ENCODE measurements at regions of chr16 and their contacts with region 1.

Region 1: GRCh38 chr16:81737885-81738786 is 41.0 kb upstream of the PLCG2 start:
- DNase-seq: peak; percentile 92
- H3K4me3 ChIP-seq: peak overlapping the region; percentile 71
- H3K27ac ChIP-seq: peak overlapping the region; percentile 89
- H3K4me1 ChIP-seq: peaks cover 52% of the 10 kb centered on the region
- CTCF ChIP-seq: peak; percentile 92

Region 2: DNA sequence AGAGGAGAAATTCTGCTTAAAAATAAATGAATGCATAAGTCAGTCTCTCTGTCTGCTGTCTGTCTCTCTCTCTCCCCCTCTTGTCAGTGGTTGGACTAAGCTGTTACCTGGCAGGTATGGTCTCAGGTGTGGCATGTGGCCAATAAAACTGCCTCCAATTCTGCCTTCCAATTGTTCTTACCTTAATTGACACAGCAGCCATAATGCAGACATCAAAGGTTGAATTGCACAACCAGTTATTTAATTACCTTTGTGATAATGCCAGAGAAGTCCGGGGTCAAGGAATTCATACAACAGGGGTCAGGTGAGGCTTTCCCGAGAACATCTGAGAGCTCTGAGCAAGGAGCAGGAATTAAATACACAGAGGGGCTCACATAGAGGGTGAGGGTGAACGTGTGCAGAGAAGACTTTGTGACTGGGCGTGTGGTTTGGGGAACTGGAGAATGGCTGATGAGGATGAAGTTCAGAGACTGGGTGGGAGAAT is 854.9 kb before region 1 on chr16:
- CTCF ChIA-PET with region 1: no interaction called
- POLR2A ChIA-PET with region 1: no interaction called
- intact Hi-C with region 1: no loop called
- DNase-seq: no peak
- H3K4me3 ChIP-seq: no peak overlapping the region
- H3K27ac ChIP-seq: no peak overlapping the region
- H3K4me1 ChIP-seq: no peaks in the 10 kb centered on the region
- CTCF ChIP-seq: no peak

Region 3: DNA sequence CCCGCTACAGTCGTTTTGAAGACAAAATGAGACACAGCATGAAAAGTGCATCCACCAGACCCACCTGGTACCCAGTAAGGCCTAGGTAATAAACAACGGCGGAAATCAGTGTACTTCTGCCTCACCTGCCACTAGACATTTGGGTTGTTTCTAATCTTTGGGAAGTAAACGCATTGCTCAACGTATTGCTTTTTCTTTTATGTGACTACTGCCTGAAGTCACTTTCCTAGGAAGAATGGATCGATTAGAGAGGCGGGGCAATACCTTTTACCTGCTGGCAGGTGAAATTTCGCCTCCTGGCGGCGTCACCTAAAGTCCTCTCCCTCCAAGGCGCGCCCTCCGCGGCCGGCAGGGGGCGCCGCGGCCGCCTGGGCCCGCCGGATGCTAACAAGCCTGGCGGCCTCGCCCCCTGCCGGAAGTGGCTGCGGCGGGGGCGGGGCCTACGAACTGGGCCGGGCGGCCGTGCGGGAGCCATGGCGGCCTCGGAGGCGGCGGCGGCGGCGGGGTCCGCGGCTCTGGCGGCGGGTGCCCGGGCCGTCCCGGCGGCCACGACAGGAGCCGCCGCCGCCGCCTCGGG is 702.6 kb before region 1 on chr16 and contains the start of gene ATMIN:
- CTCF ChIA-PET with region 1: no interaction called
- POLR2A ChIA-PET with region 1: no interaction called
- intact Hi-C with region 1: loop called (anchors 5 kb)
- DNase-seq: peak; percentile 93
- H3K4me3 ChIP-seq: peak within 1 kb of the TSS; percentile 76
- H3K27ac ChIP-seq: peak within 1 kb of the TSS; percentile 15
- H3K4me1 ChIP-seq: peaks cover 13% of the 10 kb centered on the region
- CTCF ChIP-seq: peak; percentile 95
- total RNA-seq, gene ATMIN: 13.6 and 15.0 TPM in 2 replicates

Region 4: DNA sequence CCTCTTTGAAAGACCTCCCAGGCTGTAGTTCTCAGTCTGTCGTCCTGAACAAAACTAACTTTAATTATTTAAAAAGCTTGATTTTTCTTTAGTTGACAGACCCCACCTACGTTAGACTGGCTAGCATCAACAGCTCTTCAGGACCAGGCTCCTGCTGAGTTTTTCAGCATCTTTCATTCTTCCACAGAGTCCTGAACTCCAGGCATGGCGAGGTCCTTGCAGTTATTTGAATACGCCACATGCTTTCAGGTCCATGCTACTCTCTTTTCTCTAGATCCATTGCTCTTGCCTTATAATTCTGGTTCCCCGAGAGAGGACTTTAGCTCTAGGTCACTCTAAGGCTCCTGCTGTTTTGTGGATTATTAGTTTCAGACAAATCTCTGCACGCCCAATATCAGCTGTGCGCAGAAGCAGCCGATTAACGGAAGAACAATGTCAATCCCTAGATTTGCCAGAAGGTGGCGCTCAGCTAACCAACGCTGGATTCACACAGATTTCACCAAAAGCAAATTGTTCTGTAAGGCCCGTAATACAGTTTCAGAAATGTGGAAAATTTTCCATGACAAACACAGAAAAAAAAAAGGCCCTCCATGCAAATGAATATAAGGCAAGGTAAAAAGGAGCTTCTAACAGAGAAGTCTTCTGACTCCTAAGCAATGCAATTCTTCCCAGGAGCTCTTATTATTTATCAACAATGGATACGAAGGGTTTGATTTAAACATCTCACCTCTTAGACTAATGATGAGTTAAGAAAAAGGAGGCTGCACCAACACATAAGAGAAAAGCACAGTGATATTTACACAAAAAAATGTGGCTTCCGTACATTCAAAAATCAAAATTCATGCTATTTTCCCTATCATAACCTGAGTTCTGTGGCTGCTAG is 533.1 kb before region 1 on chr16:
- CTCF ChIA-PET with region 1: no interaction called
- POLR2A ChIA-PET with region 1: no interaction called
- intact Hi-C with region 1: loop called (anchors 1 kb)
- DNase-seq: peak; percentile 46
- H3K4me3 ChIP-seq: no peak overlapping the region
- H3K27ac ChIP-seq: no peak overlapping the region
- H3K4me1 ChIP-seq: no peaks in the 10 kb centered on the region
- CTCF ChIP-seq: peak; percentile 92

Region 5: GRCh38 chr16:81403616-81404373 is 334.3 kb before region 1 on chr16:
- CTCF ChIA-PET with region 1: no interaction called
- POLR2A ChIA-PET with region 1: interaction called, 12 read pairs
- intact Hi-C with region 1: loop called (anchors 1 kb)
- DNase-seq: peak; percentile 86
- H3K4me3 ChIP-seq: peak overlapping the region; percentile 55
- H3K27ac ChIP-seq: no peak overlapping the region
- H3K4me1 ChIP-seq: peaks cover 10% of the 10 kb centered on the region
- CTCF ChIP-seq: peak; percentile 92

Region 6: GRCh38 chr16:81752225-81752875 is 14.2 kb after region 1 on chr16:
- CTCF ChIA-PET with region 1: interaction called, 6 read pairs
- POLR2A ChIA-PET with region 1: interaction called, 26 read pairs
- intact Hi-C with region 1: no loop called
- DNase-seq: peak; percentile 89
- H3K4me3 ChIP-seq: peak overlapping the region; percentile 43
- H3K27ac ChIP-seq: peak overlapping the region; percentile 66
- H3K4me1 ChIP-seq: peaks cover 63% of the 10 kb centered on the region
- CTCF ChIP-seq: no peak

Region 7: DNA sequence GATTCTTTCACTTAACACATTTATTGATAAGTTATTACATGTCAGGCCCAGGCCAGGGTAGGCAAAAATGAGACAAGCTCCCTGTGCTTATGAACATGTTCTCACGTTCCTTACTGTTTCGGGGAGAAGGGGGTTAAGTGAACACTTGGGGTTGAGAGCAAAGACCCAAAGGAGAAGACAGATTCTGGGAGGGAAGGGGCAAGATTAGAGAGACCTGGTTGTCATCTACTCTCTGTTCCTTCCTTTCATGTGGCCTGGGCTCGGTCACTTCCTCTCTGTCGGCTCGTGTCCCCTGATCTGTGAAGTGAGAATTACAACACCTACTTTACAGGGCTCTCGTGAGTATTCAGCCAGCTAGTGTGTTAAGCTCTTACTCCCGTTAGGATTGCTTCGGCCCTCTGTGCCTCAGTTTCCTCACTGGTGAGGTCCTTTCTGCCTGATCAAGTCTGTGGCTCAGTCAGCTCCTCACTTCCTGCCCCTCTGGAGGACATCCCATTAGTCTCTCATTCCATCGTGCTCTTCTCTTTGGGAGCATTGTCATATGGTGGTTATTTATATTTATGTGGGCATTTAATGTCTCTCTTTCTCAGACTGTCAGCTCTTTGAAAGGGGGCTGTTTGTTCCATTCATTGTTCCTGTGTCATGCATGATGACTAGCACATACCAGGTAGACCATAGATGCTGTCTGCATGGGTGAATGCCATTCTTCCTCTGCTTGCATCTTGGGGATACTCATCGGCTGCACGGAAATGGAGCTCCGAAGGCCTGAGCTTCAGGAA is 79.8 kb after region 1 on chr16:
- CTCF ChIA-PET with region 1: no interaction called
- POLR2A ChIA-PET with region 1: interaction called, 12 read pairs
- intact Hi-C with region 1: loop called (anchors 2 kb)
- DNase-seq: peak; percentile 88
- H3K4me3 ChIP-seq: peak overlapping the region; percentile 64
- H3K27ac ChIP-seq: peak overlapping the region; percentile 97
- H3K4me1 ChIP-seq: peaks cover 95% of the 10 kb centered on the region
- CTCF ChIP-seq: no peak

Region 8: DNA sequence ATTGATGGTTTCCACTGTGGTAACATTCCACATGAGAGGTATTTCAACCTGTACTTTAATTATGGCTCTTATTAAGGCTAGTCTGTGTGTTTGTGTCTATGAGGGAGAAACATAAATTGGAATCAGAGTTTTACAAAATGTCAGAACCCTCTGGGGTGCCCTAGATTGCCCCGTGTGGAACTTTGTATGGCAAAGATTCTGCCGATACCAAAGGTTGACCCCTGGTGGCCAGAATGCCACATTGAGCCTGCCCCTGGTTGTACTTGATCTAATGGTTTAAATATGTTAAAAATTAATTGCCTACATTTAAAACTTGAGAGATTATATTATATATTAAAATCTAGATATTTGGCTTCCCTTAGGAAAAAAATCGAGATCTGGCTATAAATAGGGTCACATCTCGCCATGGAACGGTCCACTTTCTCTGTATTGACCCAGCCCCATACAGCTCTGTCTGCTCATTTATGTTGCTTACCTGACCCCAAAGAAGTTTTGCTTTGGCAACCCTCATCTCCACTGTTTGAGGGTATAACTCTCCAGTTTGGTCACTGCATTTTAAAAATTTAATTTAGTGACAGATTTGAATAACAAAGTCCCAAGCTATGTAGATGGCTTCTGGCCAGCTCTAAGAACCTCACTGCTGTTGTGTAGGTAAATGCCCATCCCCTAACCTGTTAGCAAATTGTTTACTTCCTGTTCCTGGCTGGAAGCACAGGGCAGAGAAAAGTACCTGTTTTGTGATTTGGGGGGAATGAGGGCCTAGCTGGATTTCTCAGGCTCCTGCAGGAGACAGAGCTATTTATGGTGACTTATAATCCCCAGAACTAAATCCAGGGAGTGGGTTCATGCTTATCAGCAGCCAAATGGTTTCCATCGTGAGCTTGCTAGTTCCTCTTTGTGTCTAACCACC is 136.0 kb after region 1 on chr16:
- CTCF ChIA-PET with region 1: interaction called, 3 read pairs
- POLR2A ChIA-PET with region 1: interaction called, 3 read pairs
- intact Hi-C with region 1: loop called (anchors 2 kb)
- DNase-seq: peak; percentile 81
- H3K4me3 ChIP-seq: no peak overlapping the region
- H3K27ac ChIP-seq: peak overlapping the region; percentile 47
- H3K4me1 ChIP-seq: peaks cover 44% of the 10 kb centered on the region
- CTCF ChIP-seq: peak; percentile 98